ENCODE measurements at regions of chr20 and their contacts with region 1.

Region 1: GRCh38 chr20:52379723-52380336 is 188.3 kb upstream of the ZFP64 start:
- DNase-seq: no peak
- H3K4me3 ChIP-seq: no peak overlapping the region
- H3K27ac ChIP-seq: no peak overlapping the region
- H3K4me1 ChIP-seq: no peaks in the 10 kb centered on the region
- H3K27me3 ChIP-seq: no peaks in the 10 kb centered on the region
- CTCF ChIP-seq: peak; percentile 69 to 90 (median 82)
- POLR2A ChIP-seq: no peak

Region 2: GRCh38 chr20:52242237-52243230 is 137.3 kb before region 1 on chr20:
- intact Hi-C with region 1: loop called (anchors 5 kb)
- DNase-seq: no peak
- H3K4me3 ChIP-seq: no peak overlapping the region
- H3K27ac ChIP-seq: no peak overlapping the region
- H3K4me1 ChIP-seq: no peaks in the 10 kb centered on the region
- H3K27me3 ChIP-seq: no peaks in the 10 kb centered on the region
- CTCF ChIP-seq: peak in 5 of 6 experiments; percentile 36 to 68 (median 61)
- POLR2A ChIP-seq: no peak

Measured in esophagus squamous epithelium (tissue), 5 donors.